ENCODE measurements at regions of chr19 and their contacts with region 1.

Region 1: GRCh38 chr19:35995048-35995993 is at the start of gene SDHAF1:
- DNase-seq: peak; percentile 97 to 98 (median 98)
- ATAC-seq: peak; percentile 95 to 98 (median 96)
- H3K4me3 ChIP-seq: peak within 1 kb of the TSS; percentile 67 to 99 (median 90)
- H3K27ac ChIP-seq: peak within 1 kb of the TSS in 11 of 12 donors; percentile 68 to 88 (median 83)
- H3K4me1 ChIP-seq: peaks cover 4 to 43% (median 25%) of the 10 kb centered on the region in 12 donors
- H3K27me3 ChIP-seq: no peaks in the 10 kb centered on the region
- CTCF ChIP-seq: peak in 1 of 12 donors; percentile 11
- POLR2A ChIP-seq: peak in 1 of 2 donors; percentile 49
- total RNA-seq, gene SDHAF1: 9.7 to 41.8 (median 11.4) TPM

Region 2: GRCh38 chr19:36014029-36014924 is 19.0 kb after region 1 on chr19 and contains the start of gene ALKBH6:
- intact Hi-C with region 1: loop called in 1 of 10 experiments (anchors 1 kb)
- DNase-seq: peak; percentile 100
- ATAC-seq: peak; percentile 98 to 100 (median 100)
- H3K4me3 ChIP-seq: peak within 1 kb of the TSS; percentile 44 to 98 (median 74)
- H3K27ac ChIP-seq: peak within 1 kb of the TSS; percentile 25 to 89 (median 71)
- H3K4me1 ChIP-seq: peaks cover 0 to 21% (median 11%) of the 10 kb centered on the region in 12 donors
- H3K27me3 ChIP-seq: no peaks in the 10 kb centered on the region
- CTCF ChIP-seq: peak in 1 of 12 donors; percentile 15
- POLR2A ChIP-seq: peak in 1 of 2 donors; percentile 13
- total RNA-seq, gene ALKBH6: 7.3 to 22.5 (median 11.5) TPM

Region 3: GRCh38 chr19:36041831-36042230 is 46.5 kb after region 1 on chr19:
- intact Hi-C with region 1: no loop called
- DNase-seq: no peak
- ATAC-seq: peak in 3 of 4 donors; percentile 42 to 70 (median 64)
- H3K4me3 ChIP-seq: no peak overlapping the region
- H3K27ac ChIP-seq: peak overlapping the region in 1 of 12 donors; percentile 64
- H3K4me1 ChIP-seq: peaks cover 0 to 7% (median 0%) of the 10 kb centered on the region in 12 donors
- H3K27me3 ChIP-seq: no peaks in the 10 kb centered on the region
- CTCF ChIP-seq: no peak
- POLR2A ChIP-seq: no peak

Region 4: DNA sequence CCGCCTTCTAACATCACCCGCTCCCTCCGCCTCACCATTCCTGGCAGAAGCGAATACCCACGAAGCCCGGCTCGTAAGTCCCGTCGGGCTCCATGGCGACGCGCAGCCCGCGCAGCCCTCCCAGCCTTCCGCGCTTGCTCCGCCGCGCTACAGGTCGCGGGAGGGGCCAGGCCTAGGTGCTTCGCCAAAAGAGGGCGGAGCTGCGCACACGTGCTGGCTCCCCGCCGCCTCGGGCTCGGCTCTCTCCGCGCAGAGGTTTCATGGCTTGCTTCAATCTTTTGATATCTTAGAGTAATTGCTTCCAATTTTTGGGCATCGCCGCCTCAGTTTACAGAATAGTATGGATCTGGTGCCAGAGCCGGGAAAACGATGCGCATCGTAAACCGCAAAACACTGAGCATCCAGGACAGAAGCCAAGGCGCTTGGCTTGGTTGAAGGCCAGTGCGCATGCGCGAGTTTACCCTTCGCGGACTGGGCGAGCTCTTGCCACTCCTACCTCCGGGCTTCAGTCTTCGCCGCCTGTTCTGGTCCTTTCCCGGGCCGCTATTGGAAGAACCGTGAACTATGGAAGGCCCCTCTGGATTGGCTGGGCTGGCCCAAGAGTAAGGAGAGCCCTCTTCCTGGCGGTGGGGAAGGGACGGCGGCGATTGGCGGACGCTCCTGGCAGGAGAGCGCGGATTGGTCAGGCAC is 119.6 kb after region 1 on chr19 and contains the start of gene POLR2I:
- intact Hi-C with region 1: loop called in 4 of 10 experiments (anchors 5 to 10 kb)
- DNase-seq: peak; percentile 99 to 100 (median 100)
- ATAC-seq: peak; percentile 95 to 99 (median 97)
- H3K4me3 ChIP-seq: peak within 1 kb of the TSS; percentile 60 to 98 (median 90)
- H3K27ac ChIP-seq: peak within 1 kb of the TSS; percentile 28 to 93 (median 88)
- H3K4me1 ChIP-seq: peaks cover 3 to 32% (median 19%) of the 10 kb centered on the region in 12 donors
- H3K27me3 ChIP-seq: no peaks in the 10 kb centered on the region
- CTCF ChIP-seq: no peak
- POLR2A ChIP-seq: peak in 1 of 2 donors; percentile 50
- total RNA-seq, gene POLR2I: 80.4 to 153 (median 107) TPM

Region 5: GRCh38 chr19:36132489-36132891 is 137.2 kb after region 1 on chr19:
- intact Hi-C with region 1: no loop called
- DNase-seq: no peak
- ATAC-seq: no peak
- H3K4me3 ChIP-seq: no peak overlapping the region
- H3K27ac ChIP-seq: peak overlapping the region in 1 of 12 donors; percentile 61
- H3K4me1 ChIP-seq: peaks cover 0 to 54% (median 11%) of the 10 kb centered on the region in 12 donors
- H3K27me3 ChIP-seq: no peaks in the 10 kb centered on the region
- CTCF ChIP-seq: no peak
- POLR2A ChIP-seq: no peak